Motor neuron (in vitro differentiated cells): ENCODE measurements at regions of chr17 and their contacts with region 1.

Region 1: GRCh38 chr17:64262417-64263260 is at the start of gene TEX2:
- ATAC-seq: peak; percentile 37 to 62 (median 54)
- H3K4me3 ChIP-seq: peak within 1 kb of the TSS; percentile 69 to 100 (median 91)
- H3K27ac ChIP-seq: peak within 1 kb of the TSS in 1 of 2 donors; percentile 68
- H3K4me1 ChIP-seq: peaks cover 7 to 25% of the 10 kb centered on the region in 2 donors
- total RNA-seq, gene TEX2: 13.9 to 50.9 (median 23.9) TPM

Region 2: DNA sequence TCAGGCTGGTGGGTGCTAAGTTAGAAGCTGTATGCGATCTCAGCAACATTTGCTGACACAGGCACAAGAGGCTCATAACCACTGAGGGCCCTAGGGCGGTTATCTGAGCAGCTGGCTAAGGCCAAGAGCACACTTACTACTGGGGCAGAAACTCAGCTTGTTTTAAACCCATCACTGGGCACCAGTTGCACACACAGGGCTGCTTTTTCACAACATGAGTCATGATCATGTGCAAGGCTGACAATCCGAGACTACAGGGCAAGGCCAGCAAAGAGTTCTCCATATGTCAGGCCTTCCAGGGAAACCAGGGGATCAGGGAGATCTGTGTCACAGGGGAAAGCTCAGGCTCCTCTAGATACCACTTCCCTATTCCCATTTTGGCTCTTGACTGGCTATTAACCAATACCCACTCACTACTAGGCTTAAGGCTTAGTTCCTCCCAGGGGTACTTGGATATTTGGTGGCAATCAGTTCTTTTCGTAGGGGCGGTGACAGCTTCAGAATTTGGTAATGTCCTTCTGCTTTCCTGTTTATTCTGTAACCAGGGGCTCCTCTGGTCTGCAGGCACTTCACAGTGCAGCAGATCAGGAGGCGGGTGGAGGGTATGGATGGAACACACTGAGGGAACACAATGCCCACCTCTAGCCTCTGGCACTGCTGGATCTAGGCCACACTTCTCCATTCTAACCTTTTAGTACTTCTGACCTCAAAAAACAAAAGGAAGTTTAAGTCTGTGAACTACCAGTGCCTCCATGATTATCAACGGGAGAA is 87.8 kb before region 1 on chr17:
- in situ Hi-C with region 1: loop called in 2 of 9 experiments (anchors 25 kb)
- ATAC-seq: peak; percentile 40 to 98 (median 78)
- H3K4me3 ChIP-seq: no peak overlapping the region
- H3K27ac ChIP-seq: no peak overlapping the region
- H3K4me1 ChIP-seq: no peaks in the 10 kb centered on the region

Region 3: GRCh38 chr17:64343853-64344637 is 81.4 kb after region 1 on chr17:
- in situ Hi-C with region 1: no loop called
- ATAC-seq: peak; percentile 41 to 89 (median 86)
- H3K4me3 ChIP-seq: no peak overlapping the region
- H3K27ac ChIP-seq: peak overlapping the region; percentile 36 to 57
- H3K4me1 ChIP-seq: peaks cover 9 to 18% of the 10 kb centered on the region in 2 donors